Common myeloid progenitor, CD34-positive (primary cell): ENCODE measurements at regions of chr14 and their contacts with region 1.

Region 1: GRCh38 chr14:58395812-58396788 is at the start of gene TOMM20L:
- DNase-seq: peak; percentile 64 to 83 (median 80)
- H3K4me3 ChIP-seq: peak within 1 kb of the TSS; percentile 41 to 85 (median 67)
- H3K27ac ChIP-seq: peak within 1 kb of the TSS in 1 of 2 experiments; percentile 49
- H3K4me1 ChIP-seq: peaks cover 0 to 14% (median 11%) of the 10 kb centered on the region in 4 experiments
- H3K27me3 ChIP-seq: no peaks in the 10 kb centered on the region

Region 2: DNA sequence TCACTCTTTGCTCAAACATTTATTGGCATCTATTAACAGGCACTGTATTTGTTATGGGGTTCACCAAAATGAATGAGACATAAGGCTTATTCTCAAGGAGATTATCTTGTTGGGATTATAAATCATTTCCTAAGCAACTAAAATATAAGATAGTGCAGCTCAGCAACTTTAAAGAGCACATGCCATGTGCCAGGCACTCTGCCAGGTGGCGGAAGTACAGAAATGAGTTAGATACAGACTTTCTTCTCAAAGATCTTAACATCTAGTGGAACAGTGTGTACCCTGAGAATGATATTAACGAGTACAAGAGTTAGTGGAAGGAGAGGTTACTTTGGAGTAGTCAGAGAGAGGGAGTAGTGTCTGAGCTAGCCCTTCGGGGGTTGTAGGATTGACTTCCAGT is 28.8 kb before region 1 on chr14:
- CTCF ChIA-PET with region 1: no interaction called
- POLR2A ChIA-PET with region 1: no interaction called
- DNase-seq: no peak
- H3K4me3 ChIP-seq: no peak overlapping the region
- H3K27ac ChIP-seq: no peak overlapping the region
- H3K4me1 ChIP-seq: no peaks in the 10 kb centered on the region
- H3K27me3 ChIP-seq: no peaks in the 10 kb centered on the region

Region 3: GRCh38 chr14:58427281-58428117 is 31.4 kb after region 1 on chr14 and contains the starts of genes KIAA0586 and TIMM9:
- CTCF ChIA-PET with region 1: interaction called, 19 read pairs
- POLR2A ChIA-PET with region 1: interaction called, 5 read pairs
- DNase-seq: peak; percentile 99 to 100 (median 100)
- H3K4me3 ChIP-seq: peak within 1 kb of the TSS; percentile 84 to 100 (median 96)
- H3K27ac ChIP-seq: peak within 1 kb of the TSS; percentile 98 to 99
- H3K4me1 ChIP-seq: peaks cover 4 to 34% (median 21%) of the 10 kb centered on the region in 4 experiments
- H3K27me3 ChIP-seq: no peaks in the 10 kb centered on the region

Region 4: DNA sequence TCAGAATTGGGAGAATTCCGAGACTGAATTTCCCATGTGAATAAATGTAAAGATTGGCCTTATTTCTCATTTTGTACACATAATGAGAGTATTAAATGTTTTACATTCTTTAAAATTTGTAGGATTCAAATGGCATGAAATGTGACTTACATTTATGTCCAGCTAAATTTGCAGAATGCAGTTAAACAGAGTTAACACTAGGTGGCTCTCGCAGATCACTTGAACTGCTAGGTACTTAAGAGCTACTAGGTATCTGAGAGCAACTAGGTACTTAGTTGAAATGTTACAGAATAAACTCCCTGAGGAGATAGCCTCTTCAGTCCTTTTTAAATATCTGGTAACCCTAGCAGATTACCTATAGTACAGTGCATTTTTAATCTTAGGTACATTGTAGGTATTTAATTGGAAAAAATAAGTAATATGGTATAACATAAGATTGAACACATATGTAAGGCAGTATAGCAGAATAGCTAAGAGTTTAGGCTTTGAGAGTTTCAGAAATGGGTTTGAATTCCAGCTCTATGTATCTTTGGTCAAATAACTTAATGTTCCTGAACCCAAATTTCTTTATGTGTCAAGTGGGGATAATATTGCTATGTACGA is 105.2 kb after region 1 on chr14:
- CTCF ChIA-PET with region 1: no interaction called
- POLR2A ChIA-PET with region 1: no interaction called
- DNase-seq: peak; percentile 67 to 88 (median 85)
- H3K4me3 ChIP-seq: no peak overlapping the region
- H3K27ac ChIP-seq: no peak overlapping the region
- H3K4me1 ChIP-seq: no peaks in the 10 kb centered on the region
- H3K27me3 ChIP-seq: no peaks in the 10 kb centered on the region

Region 5: DNA sequence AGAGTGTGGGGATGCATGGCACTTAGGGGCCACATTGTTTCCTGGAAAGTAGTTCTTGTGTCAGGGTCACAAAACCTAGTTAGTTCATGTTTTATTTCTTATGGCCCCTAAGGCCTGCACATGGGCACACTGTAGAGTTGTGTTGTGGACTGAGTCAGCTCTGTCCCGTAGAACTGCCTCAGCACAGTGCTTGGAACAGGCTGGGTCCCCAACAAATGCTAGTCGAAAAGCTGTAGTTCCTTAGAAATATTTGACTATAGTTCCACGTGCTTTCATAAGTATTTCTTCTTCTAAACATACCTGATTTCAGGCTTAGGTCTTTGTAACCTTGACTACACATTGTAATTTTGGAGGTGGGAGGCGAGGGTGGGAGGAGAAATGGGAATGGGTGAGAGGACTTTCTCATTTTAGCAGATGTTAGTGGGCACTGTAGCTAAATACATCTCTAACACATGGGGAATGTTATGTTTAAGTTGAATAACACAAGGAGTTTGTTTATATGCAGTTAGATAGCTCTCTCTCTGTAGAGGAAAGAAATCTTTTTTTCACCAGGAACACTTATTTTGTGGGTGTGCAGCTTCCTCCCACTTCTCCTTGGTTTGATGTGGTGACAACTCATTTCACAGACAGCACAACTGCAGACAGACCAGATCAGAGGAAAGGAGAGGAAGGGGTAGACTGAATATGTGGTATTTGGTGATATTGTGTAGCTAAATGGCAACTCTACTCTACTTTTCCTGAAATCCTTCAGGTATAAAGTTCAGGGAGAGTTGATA is 202.1 kb after region 1 on chr14:
- CTCF ChIA-PET with region 1: no interaction called
- POLR2A ChIA-PET with region 1: no interaction called
- DNase-seq: no peak
- H3K4me3 ChIP-seq: no peak overlapping the region
- H3K27ac ChIP-seq: no peak overlapping the region
- H3K4me1 ChIP-seq: peaks cover 0 to 3% (median 0%) of the 10 kb centered on the region in 4 experiments
- H3K27me3 ChIP-seq: no peaks in the 10 kb centered on the region